ENCODE measurements at regions of chr20 and their contacts with region 1.

Region 1: GRCh38 chr20:1437235-1437904 is 29.3 kb downstream of the NSFL1C start:
- DNase-seq: peak; percentile 58 to 76
- H3K4me3 ChIP-seq: no peak overlapping the region
- H3K27ac ChIP-seq: no peak overlapping the region
- H3K4me1 ChIP-seq: no peaks in the 10 kb centered on the region
- H3K27me3 ChIP-seq: no peaks in the 10 kb centered on the region
- CTCF ChIP-seq: peak; percentile 60 to 92 (median 74)
- POLR2A ChIP-seq: no peak

Region 2: DNA sequence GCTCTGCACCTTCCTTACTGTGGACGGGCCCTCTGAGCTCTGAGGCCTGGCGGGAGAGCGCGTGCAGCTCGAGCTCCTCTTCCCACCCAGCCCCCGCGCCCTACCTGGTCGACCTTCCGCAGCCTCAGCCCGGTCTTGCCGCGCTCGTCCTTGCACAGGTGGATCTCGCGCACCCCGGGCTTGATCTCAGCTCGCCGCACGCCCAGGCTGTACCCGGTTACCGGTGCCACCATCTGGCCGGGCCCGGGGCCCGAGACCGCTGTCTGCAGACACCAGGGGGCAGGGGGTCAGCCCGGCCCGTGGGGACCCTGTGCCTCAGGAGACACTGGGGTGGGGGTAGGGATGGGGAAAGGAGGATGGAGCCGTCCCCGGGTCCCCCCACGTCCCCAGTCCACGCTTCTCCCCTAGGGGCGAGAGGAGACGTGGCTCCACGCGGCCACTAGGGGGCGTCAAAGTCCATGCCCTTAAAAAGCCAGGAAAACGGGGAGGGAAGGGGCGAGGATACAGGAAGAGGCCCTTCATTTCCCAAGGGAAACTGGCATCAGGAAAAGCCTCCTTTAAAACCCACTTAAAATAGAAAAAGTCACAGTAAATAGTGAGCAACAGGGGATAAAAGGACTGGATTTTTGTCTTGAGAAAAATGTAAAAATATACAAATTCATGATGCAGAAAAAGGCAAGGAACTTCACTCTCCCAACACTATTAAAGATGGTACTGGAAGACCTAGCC is 124.0 kb before region 1 on chr20:
- intact Hi-C with region 1: loop called (anchors 5 kb)
- DNase-seq: peak; percentile 70 to 78
- H3K4me3 ChIP-seq: no peak overlapping the region
- H3K27ac ChIP-seq: peak overlapping the region in 1 of 3 donors; percentile 11
- H3K4me1 ChIP-seq: peaks cover 0 to 12% of the 10 kb centered on the region in 2 donors
- H3K27me3 ChIP-seq: no peaks in the 10 kb centered on the region
- CTCF ChIP-seq: peak; percentile 92 to 98 (median 95)
- POLR2A ChIP-seq: no peak

Region 3: GRCh38 chr20:1357921-1358671 is 79.3 kb before region 1 on chr20:
- intact Hi-C with region 1: no loop called
- DNase-seq: no peak
- H3K4me3 ChIP-seq: no peak overlapping the region
- H3K27ac ChIP-seq: no peak overlapping the region
- H3K4me1 ChIP-seq: no peaks in the 10 kb centered on the region
- H3K27me3 ChIP-seq: no peaks in the 10 kb centered on the region
- CTCF ChIP-seq: no peak
- POLR2A ChIP-seq: no peak

Region 4: DNA sequence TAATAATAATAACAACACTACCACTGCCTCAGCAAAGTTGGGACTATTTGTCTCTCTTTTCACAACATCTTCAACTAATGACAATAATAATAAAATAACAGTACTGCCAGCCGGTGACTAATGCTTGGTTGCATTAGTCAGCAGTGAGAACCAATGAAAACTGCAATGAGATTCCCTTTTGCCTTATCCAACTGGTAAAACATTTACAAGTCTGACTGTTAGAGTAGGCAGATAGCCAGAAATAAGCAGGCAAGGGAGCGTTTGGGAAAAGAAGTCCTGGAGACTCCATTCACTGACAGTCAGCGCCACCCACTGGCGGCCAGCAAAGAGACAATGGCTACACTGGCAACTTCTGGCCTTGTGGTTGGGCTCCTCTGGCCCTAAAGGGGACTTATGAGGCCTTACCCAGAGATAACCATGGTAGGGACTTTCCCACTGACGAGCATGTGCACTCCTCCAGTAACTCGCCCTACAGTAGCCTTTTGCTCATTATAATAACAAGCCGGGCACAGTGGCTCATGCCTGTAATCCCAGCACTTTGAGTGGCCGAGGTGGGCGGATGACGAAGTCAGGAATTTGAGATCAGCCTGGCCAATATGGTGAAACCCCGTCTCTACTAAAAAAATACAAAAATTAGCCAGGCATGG is 32.7 kb after region 1 on chr20:
- intact Hi-C with region 1: no loop called
- DNase-seq: peak; percentile 71 to 79
- H3K4me3 ChIP-seq: no peak overlapping the region
- H3K27ac ChIP-seq: no peak overlapping the region
- H3K4me1 ChIP-seq: peaks cover 14 to 33% of the 10 kb centered on the region in 2 donors
- H3K27me3 ChIP-seq: no peaks in the 10 kb centered on the region
- CTCF ChIP-seq: peak in 5 of 6 experiments; percentile 37 to 69 (median 68)
- POLR2A ChIP-seq: no peak

Measured in thyroid gland (tissue), 4 donors.